IMR-90 (cell line): ENCODE measurements at regions of chr22 and their contacts with region 1.

Region 1: DNA sequence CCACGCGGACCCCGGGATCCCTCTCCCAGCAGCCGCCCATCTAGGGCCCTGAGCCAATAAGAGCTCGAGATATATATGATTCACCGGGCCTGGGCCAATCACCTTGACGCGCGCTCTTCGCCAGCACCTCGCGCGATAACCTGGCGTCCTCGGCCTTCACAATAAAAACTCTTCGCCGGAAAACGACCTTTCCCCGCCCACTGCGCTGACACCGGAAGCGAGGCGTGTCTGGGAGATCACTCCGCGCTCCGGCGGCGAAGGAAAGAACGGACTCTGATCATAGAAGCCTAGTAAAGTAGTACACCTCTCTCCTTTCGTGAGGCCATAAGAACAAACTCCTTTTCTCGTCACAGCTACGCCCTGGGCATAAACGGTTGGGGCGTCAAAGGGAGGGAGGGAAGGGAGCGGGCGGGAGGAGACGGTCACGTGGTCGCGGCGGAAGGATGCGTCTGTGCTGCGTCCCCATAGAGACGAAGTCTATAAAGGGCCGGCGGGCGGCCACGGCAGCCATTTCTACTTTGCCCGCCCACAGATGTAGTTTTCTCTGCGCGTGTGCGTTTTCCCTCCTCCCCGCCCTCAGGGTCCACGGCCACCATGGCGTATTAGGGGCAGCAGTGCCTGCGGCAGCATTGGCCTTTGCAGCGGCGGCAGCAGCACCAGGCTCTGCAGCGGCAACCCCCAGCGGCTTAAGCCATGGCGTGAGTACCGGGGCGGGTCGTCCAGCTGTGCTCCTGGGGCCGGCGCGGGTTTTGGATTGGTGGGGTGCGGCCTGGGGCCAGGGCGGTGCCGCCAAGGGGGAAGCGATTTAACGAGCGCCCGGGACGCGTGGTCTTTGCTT is at the start of gene ATF4:
- DNase-seq: peak; percentile 99
- ATAC-seq: peak; percentile 76
- H3K4me3 ChIP-seq: peak within 1 kb of the TSS; percentile 89
- H3K27ac ChIP-seq: peak within 1 kb of the TSS; percentile 97
- H3K4me1 ChIP-seq: peaks cover 4% of the 10 kb centered on the region
- H3K27me3 ChIP-seq: no peaks in the 10 kb centered on the region
- CTCF ChIP-seq: no peak
- POLR2A ChIP-seq: peak; percentile 99
- RAD21 ChIP-seq: no peak
- total RNA-seq, gene ATF4: 136 and 148 TPM in 2 replicates

Region 2: DNA sequence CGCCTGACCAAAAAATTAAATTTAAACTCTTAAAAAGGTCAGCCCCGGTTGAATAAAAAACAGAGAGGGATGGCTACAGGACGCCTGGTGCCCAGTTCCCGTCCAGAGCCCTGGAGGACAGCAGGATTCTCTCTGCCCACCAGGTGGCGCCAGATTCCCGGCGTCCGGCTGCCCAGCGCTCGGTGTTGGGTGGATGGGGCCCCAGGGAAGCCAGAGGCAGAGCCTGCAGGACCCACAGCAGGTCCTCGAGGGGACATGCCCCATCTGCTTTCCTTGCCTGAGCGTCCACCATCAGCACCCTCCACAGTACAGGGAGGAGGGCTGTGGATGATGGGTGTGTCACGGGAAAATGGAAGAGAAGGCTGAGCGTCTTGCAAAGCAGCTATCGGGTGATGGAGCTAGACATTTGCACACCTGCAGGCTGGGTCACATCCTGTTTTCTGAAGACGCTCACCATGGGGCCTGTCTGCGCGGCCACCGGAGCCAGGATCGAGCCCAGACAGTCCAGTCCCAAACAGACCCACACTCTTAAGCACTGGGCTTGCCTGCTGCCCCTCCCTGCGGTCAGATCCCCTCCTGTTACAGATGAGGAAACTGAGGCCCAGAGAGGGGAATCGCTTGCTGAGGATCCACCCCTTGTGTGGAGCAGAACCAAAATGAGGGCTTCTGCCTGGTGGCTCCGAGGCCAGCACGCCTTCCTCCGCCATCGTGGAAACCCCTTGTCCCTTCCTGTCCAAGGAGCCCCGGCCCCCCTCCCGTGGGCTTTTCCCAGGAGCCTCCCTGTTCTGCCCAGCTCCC is 349.2 kb before region 1 on chr22:
- CTCF ChIA-PET with region 1: no interaction called
- POLR2A ChIA-PET with region 1: no interaction called
- dilution Hi-C with region 1: no loop called
- in situ Hi-C with region 1: no loop called
- intact Hi-C with region 1: loop called (anchors 5 kb)
- DNase-seq: peak; percentile 52
- ATAC-seq: peak; percentile 80
- H3K4me3 ChIP-seq: no peak overlapping the region
- H3K27ac ChIP-seq: no peak overlapping the region
- H3K4me1 ChIP-seq: peaks cover 32% of the 10 kb centered on the region
- H3K27me3 ChIP-seq: peaks cover 2% of the 10 kb centered on the region; the same call in 1 of the 2 replicates
- CTCF ChIP-seq: peak; percentile 97
- POLR2A ChIP-seq: no peak
- RAD21 ChIP-seq: peak; percentile 99

Region 3: GRCh38 chr22:39343259-39344048 is 176.8 kb before region 1 on chr22:
- CTCF ChIA-PET with region 1: no interaction called
- POLR2A ChIA-PET with region 1: interaction called, 7 read pairs
- dilution Hi-C with region 1: no loop called
- in situ Hi-C with region 1: no loop called
- intact Hi-C with region 1: loop called (anchors 5 kb)
- DNase-seq: peak; percentile 58
- ATAC-seq: peak; percentile 76
- H3K4me3 ChIP-seq: no peak overlapping the region
- H3K27ac ChIP-seq: no peak overlapping the region
- H3K4me1 ChIP-seq: peaks cover 7% of the 10 kb centered on the region
- H3K27me3 ChIP-seq: no peaks in the 10 kb centered on the region; the same call in 1 of the 2 replicates
- CTCF ChIP-seq: peak; percentile 69
- POLR2A ChIP-seq: no peak
- RAD21 ChIP-seq: peak; percentile 62

Region 4: GRCh38 chr22:39439170-39439569 is 81.1 kb before region 1 on chr22:
- CTCF ChIA-PET with region 1: no interaction called
- POLR2A ChIA-PET with region 1: interaction called, 25 read pairs
- dilution Hi-C with region 1: no loop called
- in situ Hi-C with region 1: no loop called
- intact Hi-C with region 1: no loop called
- DNase-seq: peak; percentile 76
- ATAC-seq: peak; percentile 66
- H3K4me3 ChIP-seq: no peak overlapping the region
- H3K27ac ChIP-seq: no peak overlapping the region
- H3K4me1 ChIP-seq: peaks cover 4% of the 10 kb centered on the region
- H3K27me3 ChIP-seq: no peaks in the 10 kb centered on the region
- CTCF ChIP-seq: no peak
- POLR2A ChIP-seq: no peak
- RAD21 ChIP-seq: no peak

Region 5: GRCh38 chr22:39502109-39502788 is 18.0 kb before region 1 on chr22 and contains the start of gene MIEF1:
- CTCF ChIA-PET with region 1: interaction called, 6 read pairs
- POLR2A ChIA-PET with region 1: interaction called, 4 read pairs
- dilution Hi-C with region 1: no loop called
- in situ Hi-C with region 1: no loop called
- intact Hi-C with region 1: loop called (anchors 2 kb)
- DNase-seq: peak; percentile 92
- ATAC-seq: peak; percentile 97
- H3K4me3 ChIP-seq: peak within 1 kb of the TSS; percentile 67
- H3K27ac ChIP-seq: peak within 1 kb of the TSS; percentile 45
- H3K4me1 ChIP-seq: peaks cover 10% of the 10 kb centered on the region
- H3K27me3 ChIP-seq: no peaks in the 10 kb centered on the region
- CTCF ChIP-seq: no peak; the same call in 1 of the 2 replicates
- POLR2A ChIP-seq: no peak
- RAD21 ChIP-seq: no peak
- total RNA-seq, gene MIEF1: 9.7 and 12.2 TPM in 2 replicates

Region 6: GRCh38 chr22:39690881-39691605 is 170.8 kb after region 1 on chr22:
- CTCF ChIA-PET with region 1: no interaction called
- POLR2A ChIA-PET with region 1: no interaction called
- dilution Hi-C with region 1: no loop called
- in situ Hi-C with region 1: no loop called
- intact Hi-C with region 1: no loop called
- DNase-seq: no peak
- ATAC-seq: peak; percentile 51
- H3K4me3 ChIP-seq: no peak overlapping the region
- H3K27ac ChIP-seq: no peak overlapping the region
- H3K4me1 ChIP-seq: peaks cover 2% of the 10 kb centered on the region; the same call in 1 of the 2 replicates
- H3K27me3 ChIP-seq: peaks cover 79% of the 10 kb centered on the region
- CTCF ChIP-seq: no peak
- POLR2A ChIP-seq: no peak
- RAD21 ChIP-seq: no peak